Breast epithelium (tissue), 4 donors: ENCODE measurements at regions of chr16 and their contacts with region 1.

Region 1: DNA sequence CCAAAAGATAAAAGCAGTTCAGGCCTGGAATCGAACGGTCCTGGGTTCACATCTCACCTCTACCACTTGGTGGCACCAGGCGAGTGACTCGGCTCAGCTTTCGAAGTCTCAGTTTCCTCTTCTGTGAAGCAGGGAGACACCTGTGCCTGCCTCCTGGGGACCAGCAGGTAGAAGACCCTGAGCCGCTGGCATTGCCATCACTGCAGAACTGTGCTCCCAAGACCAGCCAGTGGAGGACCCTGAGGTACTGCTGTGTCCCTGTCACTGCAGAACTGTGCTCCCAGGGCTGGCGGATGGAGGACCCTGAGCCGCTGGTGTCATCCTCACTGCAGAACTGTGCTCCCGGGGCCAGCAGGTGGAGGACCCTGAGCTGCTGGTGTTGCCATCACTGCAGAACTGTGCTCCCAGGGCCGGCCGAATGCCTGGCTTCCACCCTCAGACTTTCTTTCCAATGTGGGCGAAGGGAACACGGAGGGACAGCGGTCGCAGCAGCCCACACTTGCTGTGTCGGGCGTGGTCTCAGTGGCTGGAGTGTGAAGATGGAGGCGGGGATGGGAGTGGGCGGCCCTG is 8.7 kb upstream of the SLC7A5 start:
- DNase-seq: no peak
- H3K4me3 ChIP-seq: no peak overlapping the region
- H3K27ac ChIP-seq: no peak overlapping the region
- H3K4me1 ChIP-seq: no peaks in the 10 kb centered on the region
- H3K27me3 ChIP-seq: peaks cover 0 to 15% of the 10 kb centered on the region in 2 donors
- CTCF ChIP-seq: no peak
- POLR2A ChIP-seq: no peak

Region 2: DNA sequence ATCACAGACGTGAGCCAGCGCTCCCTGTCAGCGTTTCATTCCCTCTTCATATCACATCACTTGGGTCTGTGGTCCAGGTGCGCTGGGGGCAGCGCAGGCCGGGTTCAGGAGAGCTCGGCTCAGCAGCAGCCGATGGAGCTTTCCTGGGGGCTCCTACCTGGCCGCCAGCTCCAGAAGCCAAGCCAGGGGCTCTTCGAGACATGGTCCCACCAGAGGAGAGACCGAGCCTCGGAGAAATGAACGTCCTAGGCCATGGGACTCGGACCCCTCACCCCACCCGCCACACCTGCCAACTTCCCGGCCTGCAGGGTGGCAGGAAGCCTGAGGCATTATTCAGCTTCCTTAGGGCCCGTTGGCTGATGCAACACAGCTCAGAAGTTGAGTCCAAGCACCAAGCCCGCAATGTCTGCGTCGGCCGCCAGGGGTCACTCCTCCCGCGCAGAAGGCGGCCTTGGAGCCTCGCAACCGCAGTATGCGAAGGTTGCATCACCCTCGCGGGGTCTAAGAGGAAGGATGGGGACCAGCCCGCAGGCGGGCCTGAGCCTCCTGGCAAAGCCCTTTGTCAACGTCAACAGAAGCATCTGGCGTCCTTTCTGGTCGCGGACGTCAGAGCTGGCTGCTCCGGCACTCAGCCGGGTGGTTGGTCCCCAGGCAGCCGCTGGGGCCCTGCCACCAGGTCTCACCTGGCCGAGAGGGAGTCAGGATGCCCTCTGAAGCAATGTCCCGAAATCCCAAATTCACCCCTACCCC is 99.0 kb before region 1 on chr16:
- intact Hi-C with region 1: loop called (anchors 2 kb)
- DNase-seq: peak; percentile 80 to 87
- H3K4me3 ChIP-seq: no peak overlapping the region
- H3K27ac ChIP-seq: no peak overlapping the region
- H3K4me1 ChIP-seq: no peaks in the 10 kb centered on the region
- H3K27me3 ChIP-seq: peaks cover 0 to 7% of the 10 kb centered on the region in 2 donors
- CTCF ChIP-seq: peak; percentile 97 to 98 (median 97)
- POLR2A ChIP-seq: no peak

Region 3: GRCh38 chr16:87930456-87930855 is 52.4 kb after region 1 on chr16:
- intact Hi-C with region 1: no loop called
- DNase-seq: no peak
- H3K4me3 ChIP-seq: no peak overlapping the region
- H3K27ac ChIP-seq: no peak overlapping the region
- H3K4me1 ChIP-seq: no peaks in the 10 kb centered on the region
- H3K27me3 ChIP-seq: no peaks in the 10 kb centered on the region
- CTCF ChIP-seq: no peak
- POLR2A ChIP-seq: no peak